ENCODE measurements at regions of chr14 and their contacts with region 1.

Region 1: GRCh38 chr14:75293920-75294642 is 15.5 kb downstream of the FOS start:
- DNase-seq: peak; percentile 98
- H3K4me3 ChIP-seq: peak overlapping the region; percentile 44 to 62 (median 56)
- H3K27ac ChIP-seq: peak overlapping the region; percentile 88 to 96 (median 93)
- H3K4me1 ChIP-seq: peaks cover 0 to 31% (median 21%) of the 10 kb centered on the region in 4 donors
- H3K27me3 ChIP-seq: no peaks in the 10 kb centered on the region
- CTCF ChIP-seq: no peak
- EP300 ChIP-seq: peak; percentile 36 to 91 (median 68)
- POLR2A ChIP-seq: peak in 1 of 2 donors; percentile 47

Region 2: DNA sequence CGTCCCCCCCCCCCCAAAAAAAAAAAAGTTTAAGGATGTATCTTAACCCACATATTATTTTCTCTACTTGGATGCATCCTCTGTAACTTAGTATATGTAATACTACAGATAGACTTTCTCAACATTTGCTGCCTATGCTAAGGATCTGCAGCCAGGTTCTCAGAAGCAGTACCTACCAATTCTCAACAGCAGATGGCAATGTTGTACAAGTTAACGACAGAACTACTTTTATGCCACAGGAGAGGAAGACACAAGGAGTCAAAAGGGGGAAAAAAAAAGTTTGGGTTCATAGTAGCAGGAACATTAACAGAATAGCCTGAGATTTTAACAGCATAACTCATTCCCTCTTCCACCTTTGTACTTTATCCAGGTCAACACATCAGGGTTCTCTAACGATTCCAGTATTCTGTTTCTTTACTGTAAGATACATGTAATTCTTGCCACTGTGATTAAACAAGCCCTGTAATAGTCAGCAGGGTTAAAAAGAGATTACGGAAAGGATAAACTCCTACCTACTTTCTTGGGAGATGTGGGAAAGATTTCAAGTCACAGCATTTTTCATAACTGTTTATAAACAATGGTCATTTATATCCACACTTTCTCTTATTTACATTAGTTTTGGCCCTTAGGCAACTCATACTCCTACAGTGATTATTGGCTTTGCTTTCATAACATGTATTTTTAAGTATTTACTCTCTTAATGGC is 161.5 kb before region 1 on chr14:
- intact Hi-C with region 1: loop called (anchors 1 kb)
- DNase-seq: no peak
- H3K4me3 ChIP-seq: no peak overlapping the region
- H3K27ac ChIP-seq: peak overlapping the region; percentile 9 to 57 (median 34)
- H3K4me1 ChIP-seq: peaks cover 0 to 16% (median 8%) of the 10 kb centered on the region in 4 donors
- H3K27me3 ChIP-seq: no peaks in the 10 kb centered on the region
- CTCF ChIP-seq: peak; percentile 69 to 87 (median 72)
- EP300 ChIP-seq: no peak
- POLR2A ChIP-seq: no peak

Region 3: GRCh38 chr14:75176142-75176820 is 117.8 kb before region 1 on chr14 and contains the start of gene TMED10:
- intact Hi-C with region 1: loop called (anchors 2 kb)
- DNase-seq: peak; percentile 96
- H3K4me3 ChIP-seq: peak within 1 kb of the TSS; percentile 84 to 98 (median 90)
- H3K27ac ChIP-seq: peak within 1 kb of the TSS; percentile 97 to 99 (median 98)
- H3K4me1 ChIP-seq: peaks cover 0 to 33% (median 21%) of the 10 kb centered on the region in 4 donors
- H3K27me3 ChIP-seq: no peaks in the 10 kb centered on the region
- CTCF ChIP-seq: no peak
- EP300 ChIP-seq: peak in 1 of 4 donors; percentile 32
- POLR2A ChIP-seq: peak; percentile 66 to 67
- total RNA-seq, gene TMED10: 107 to 175 (median 165) TPM

Region 4: DNA sequence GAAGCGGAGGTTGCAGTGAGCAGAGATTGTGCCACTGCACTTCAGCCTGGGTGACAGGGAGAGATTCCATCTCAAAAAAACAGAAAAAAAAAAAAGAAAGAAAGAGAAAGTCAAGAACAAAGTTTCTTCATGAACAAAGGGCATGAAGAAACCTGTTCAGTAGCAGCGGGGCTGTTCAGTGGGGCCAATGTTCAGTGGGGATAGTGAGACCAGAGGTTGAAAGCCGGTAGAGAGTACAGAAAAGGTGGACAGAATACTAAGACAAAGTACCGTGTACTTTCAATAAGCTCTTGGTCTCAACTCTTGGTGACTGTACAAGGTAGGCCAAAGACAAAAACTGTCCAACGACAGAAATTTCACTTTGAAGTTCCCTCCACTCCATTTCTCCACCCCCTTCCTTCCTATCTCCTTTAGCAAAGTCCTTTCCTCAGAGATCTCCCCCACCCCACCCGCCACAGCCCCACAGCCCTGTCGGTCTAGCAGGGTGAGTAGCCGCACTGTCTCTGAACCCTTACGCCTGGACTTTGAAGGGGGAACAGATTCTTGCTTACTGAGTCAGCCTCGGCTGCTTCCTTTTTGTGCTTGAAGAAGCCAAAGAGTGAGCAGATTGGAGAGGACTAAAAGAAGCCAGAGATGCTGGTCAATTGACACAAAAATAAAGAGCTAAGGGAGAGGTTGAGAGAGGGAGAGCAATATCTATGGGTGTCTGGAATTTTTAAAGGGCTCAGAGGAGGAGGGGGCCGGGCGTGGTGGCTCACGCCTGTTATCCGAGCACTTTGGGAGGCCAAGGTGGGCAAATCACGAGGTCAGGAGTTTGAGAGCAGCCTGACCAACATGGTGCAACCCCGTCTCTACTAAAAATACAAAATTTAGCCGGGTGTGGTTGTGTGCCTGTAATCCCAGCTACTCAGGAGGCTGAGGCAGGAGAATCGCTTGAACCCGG is 59.6 kb before region 1 on chr14:
- intact Hi-C with region 1: loop called (anchors 2 kb)
- DNase-seq: peak; percentile 83
- H3K4me3 ChIP-seq: no peak overlapping the region
- H3K27ac ChIP-seq: peak overlapping the region in 3 of 4 donors; percentile 17 to 86 (median 38)
- H3K4me1 ChIP-seq: peaks cover 0 to 30% (median 25%) of the 10 kb centered on the region in 4 donors
- H3K27me3 ChIP-seq: no peaks in the 10 kb centered on the region
- CTCF ChIP-seq: no peak
- EP300 ChIP-seq: no peak
- POLR2A ChIP-seq: no peak

Region 5: DNA sequence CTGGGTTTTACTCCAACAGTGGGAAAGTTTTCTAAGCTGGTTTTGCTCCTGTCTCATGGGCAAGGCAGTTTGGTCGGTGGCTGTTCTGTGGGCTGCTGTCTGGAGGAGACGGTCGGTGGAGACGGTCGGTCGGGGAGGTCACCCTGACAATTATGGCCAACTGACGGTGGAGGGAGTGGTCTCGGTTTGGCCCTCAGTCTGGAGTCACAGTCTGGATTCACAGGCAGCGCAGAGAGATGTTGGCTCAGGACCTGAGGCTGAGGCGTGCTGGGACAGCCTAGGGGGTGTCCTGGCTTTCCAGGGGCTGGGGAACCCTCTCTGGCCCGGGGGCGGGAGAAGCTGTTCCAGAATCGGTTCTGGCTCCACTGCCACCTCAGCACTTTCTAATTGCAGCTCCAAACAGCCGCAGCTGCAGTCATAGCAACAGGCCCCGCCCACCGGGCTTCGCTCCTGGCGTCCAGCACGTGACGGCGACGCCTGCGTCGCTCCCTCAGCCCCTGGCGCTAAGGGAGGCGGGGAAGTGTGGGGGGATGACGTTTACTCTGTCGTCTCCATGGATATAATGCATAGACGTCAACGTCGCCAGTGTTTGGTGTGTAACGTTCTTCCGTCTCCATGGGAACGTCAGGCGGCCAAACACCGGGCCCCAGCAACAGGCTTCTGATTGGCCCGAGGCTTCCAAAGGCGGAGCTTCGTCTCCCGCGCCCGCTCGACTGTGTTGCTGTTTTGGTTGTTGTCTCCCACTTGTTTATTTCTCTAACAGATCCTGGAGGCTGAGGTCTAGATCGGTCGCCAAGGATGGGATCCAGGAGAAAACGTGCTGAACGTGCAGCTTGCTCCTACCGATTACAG is 35.2 kb before region 1 on chr14:
- intact Hi-C with region 1: loop called (anchors 2 kb)
- DNase-seq: peak; percentile 99
- H3K4me3 ChIP-seq: peak overlapping the region; percentile 30 to 51 (median 48)
- H3K27ac ChIP-seq: peak overlapping the region; percentile 87 to 98 (median 92)
- H3K4me1 ChIP-seq: peaks cover 0 to 23% (median 14%) of the 10 kb centered on the region in 4 donors
- H3K27me3 ChIP-seq: no peaks in the 10 kb centered on the region
- CTCF ChIP-seq: no peak
- EP300 ChIP-seq: peak; percentile 78 to 99 (median 96)
- POLR2A ChIP-seq: peak; percentile 50 to 70

Region 6: GRCh38 chr14:75278422-75279161 is 15.5 kb before region 1 on chr14 and contains the start of gene FOS:
- intact Hi-C with region 1: loop called (anchors 1 kb)
- DNase-seq: peak; percentile 98
- H3K4me3 ChIP-seq: peak within 1 kb of the TSS; percentile 57 to 83 (median 68)
- H3K27ac ChIP-seq: peak within 1 kb of the TSS; percentile 99 to 100 (median 100)
- H3K4me1 ChIP-seq: peaks cover 0 to 50% (median 42%) of the 10 kb centered on the region in 4 donors
- H3K27me3 ChIP-seq: no peaks in the 10 kb centered on the region
- CTCF ChIP-seq: no peak
- EP300 ChIP-seq: peak in 3 of 4 donors; percentile 53 to 91 (median 82)
- POLR2A ChIP-seq: peak; percentile 99
- total RNA-seq, gene FOS: 172 to 1,048 (median 650) TPM

Region 7: GRCh38 chr14:76102011-76102379 is 807.9 kb after region 1 on chr14:
- intact Hi-C with region 1: no loop called
- DNase-seq: no peak
- H3K4me3 ChIP-seq: peak overlapping the region in 1 of 4 donors; percentile 4
- H3K27ac ChIP-seq: peak overlapping the region in 3 of 4 donors; percentile 65 to 81 (median 78)
- H3K4me1 ChIP-seq: peaks cover 0 to 39% (median 38%) of the 10 kb centered on the region in 4 donors
- H3K27me3 ChIP-seq: no peaks in the 10 kb centered on the region
- CTCF ChIP-seq: no peak
- EP300 ChIP-seq: no peak
- POLR2A ChIP-seq: no peak

Measured in sigmoid colon (tissue), 7 donors.